ENCODE measurements at regions of chr14 and their contacts with region 1.

Region 1: DNA sequence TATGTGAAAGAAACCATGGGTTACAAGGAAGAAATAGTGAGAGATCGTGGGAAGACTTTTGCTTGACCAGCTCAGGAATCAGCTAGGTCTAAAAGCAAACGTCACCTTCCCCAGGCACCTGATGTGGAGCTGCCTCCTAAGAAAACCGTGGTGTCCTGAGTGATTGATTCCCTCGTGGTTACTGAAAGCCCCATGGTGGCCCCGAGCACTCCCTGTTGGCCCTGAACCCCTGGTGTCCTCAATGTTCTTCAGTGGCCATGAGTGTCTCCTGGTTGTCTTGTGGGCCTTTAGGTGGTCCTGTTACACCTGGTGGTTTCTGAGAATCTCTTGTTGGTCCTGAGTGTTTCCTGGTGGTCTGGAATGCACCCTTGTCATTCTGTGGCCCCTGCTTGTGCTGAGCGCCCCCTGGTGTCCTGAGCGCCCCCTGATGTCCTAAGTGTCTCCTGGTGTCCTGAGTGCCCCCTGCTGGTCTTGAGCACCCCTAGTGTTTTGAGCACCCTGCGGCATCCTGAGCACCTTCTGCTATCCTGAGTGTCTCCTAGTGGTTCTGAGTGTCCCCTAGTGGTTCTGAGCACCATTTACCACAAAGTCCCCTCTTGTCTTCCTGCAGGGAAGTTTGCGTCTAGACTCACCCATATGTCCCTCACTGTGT is 518.7 kb downstream of the TMEM121 start:
- DNase-seq: peak; percentile 97
- ATAC-seq: peak; percentile 100
- H3K4me3 Mint-ChIP-seq: no peak overlapping the region
- H3K27ac Mint-ChIP-seq: no peak overlapping the region
- H3K4me1 Mint-ChIP-seq: no peaks in the 10 kb centered on the region
- H3K27me3 Mint-ChIP-seq: peaks cover 4% of the 10 kb centered on the region
- CTCF ChIP-seq: peak; percentile 89

Region 2: GRCh38 chr14:106024983-106025604 is 20.0 kb before region 1 on chr14:
- CTCF ChIA-PET with region 1: interaction called, 17 read pairs
- POLR2A ChIA-PET with region 1: no interaction called
- intact Hi-C with region 1: no loop called
- DNase-seq: peak; percentile 52
- ATAC-seq: peak; percentile 79
- H3K4me3 Mint-ChIP-seq: no peak overlapping the region
- H3K27ac Mint-ChIP-seq: no peak overlapping the region
- H3K4me1 Mint-ChIP-seq: peaks cover 42% of the 10 kb centered on the region
- H3K27me3 Mint-ChIP-seq: no peaks in the 10 kb centered on the region
- CTCF ChIP-seq: no peak

Region 3: DNA sequence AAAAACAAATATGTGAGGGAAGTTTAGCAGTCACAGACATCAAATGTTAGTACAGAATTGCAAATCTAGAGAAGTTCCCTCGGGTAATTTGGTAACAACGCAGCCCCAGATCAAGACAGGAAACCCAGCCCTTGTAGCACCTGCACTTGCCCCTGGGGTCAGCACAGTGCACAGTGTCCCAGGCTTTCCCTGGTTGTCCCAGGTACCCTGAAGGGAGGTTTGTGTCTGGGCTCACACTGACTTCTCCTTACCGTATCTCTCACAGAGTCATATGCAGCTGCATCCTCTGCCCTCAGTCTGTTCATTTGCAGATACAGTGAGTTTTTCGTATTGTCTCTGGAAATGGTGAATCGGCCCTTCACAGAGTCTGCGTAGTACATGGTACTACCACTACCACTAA is 10.2 kb after region 1 on chr14:
- CTCF ChIA-PET with region 1: interaction called, 25 read pairs
- POLR2A ChIA-PET with region 1: no interaction called
- intact Hi-C with region 1: no loop called
- DNase-seq: no peak
- ATAC-seq: no peak
- H3K4me3 Mint-ChIP-seq: no peak overlapping the region
- H3K27ac Mint-ChIP-seq: no peak overlapping the region
- H3K4me1 Mint-ChIP-seq: peaks cover 6% of the 10 kb centered on the region
- H3K27me3 Mint-ChIP-seq: peaks cover 9% of the 10 kb centered on the region
- CTCF ChIP-seq: no peak

Region 4: GRCh38 chr14:106062502-106063272 is 17.6 kb after region 1 on chr14:
- CTCF ChIA-PET with region 1: interaction called, 25 read pairs
- POLR2A ChIA-PET with region 1: no interaction called
- intact Hi-C with region 1: no loop called
- DNase-seq: no peak
- ATAC-seq: no peak
- H3K4me3 Mint-ChIP-seq: no peak overlapping the region
- H3K27ac Mint-ChIP-seq: no peak overlapping the region
- H3K4me1 Mint-ChIP-seq: peaks cover 15% of the 10 kb centered on the region
- H3K27me3 Mint-ChIP-seq: peaks cover 10% of the 10 kb centered on the region
- CTCF ChIP-seq: no peak